Activated naive CD8-positive, alpha-beta T cell treated with anti-CD3 and anti-CD28 coated beads, Interleukin-2, amount 10 ng/mL, durations not matched to agents 7 days and 5 days (primary cell): ENCODE measurements at regions of chr16 and their contacts with region 1.

Region 1: GRCh38 chr16:68843482-68844210 is at the start of gene TANGO6:
- DNase-seq: peak; percentile 92
- ATAC-seq: peak; percentile 93
- H3K4me3 Mint-ChIP-seq: peak within 1 kb of the TSS; percentile 98
- H3K27ac Mint-ChIP-seq: peak within 1 kb of the TSS; percentile 95
- H3K4me1 Mint-ChIP-seq: peaks cover 26% of the 10 kb centered on the region
- H3K27me3 Mint-ChIP-seq: no peaks in the 10 kb centered on the region
- total RNA-seq, gene TANGO6: 29.2 to 29.7 TPM

Region 2: DNA sequence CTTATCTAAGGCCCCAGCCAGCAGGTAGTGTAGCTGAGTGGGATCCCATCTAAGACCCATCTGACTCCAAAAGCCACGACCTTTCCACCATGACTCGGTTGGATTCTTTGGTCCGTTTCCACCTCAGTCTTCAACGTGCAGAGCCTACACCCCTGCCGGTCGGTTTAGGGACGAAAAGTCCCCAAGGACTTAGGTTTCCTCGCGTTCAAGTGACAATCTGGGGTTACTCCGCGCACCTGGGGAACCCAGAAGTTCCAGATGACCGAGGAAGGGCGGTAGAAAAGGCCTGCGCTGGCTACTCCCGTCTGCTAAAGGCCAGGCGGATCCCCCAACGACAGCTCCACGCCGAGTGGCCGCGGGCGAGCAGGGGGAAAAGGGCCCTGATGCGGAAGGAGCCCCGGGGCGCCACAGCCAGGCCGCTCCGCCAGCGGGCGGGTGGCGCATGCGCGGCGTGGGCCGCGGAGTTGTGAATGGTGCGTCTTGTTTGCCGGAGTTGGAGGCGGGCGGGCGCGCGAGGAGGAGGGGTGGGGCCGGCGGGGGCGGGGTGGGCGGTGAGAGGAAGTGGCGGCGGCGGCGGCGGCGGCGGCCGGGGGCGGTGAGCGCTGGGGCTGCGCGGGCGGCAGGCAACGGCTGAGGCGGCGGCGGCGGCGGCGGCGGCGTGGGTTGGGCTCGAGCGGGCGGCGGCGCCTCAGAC is 1814.9 kb before region 1 on chr16 and contains the start of gene CBFB:
- POLR2A ChIA-PET with region 1: interaction called, 11 read pairs
- DNase-seq: peak; percentile 97
- ATAC-seq: peak; percentile 93
- H3K4me3 Mint-ChIP-seq: peak within 1 kb of the TSS; percentile 88
- H3K27ac Mint-ChIP-seq: peak within 1 kb of the TSS; percentile 92
- H3K4me1 Mint-ChIP-seq: peaks cover 44% of the 10 kb centered on the region
- H3K27me3 Mint-ChIP-seq: no peaks in the 10 kb centered on the region
- total RNA-seq, gene CBFB: 193 to 198 TPM

Region 3: GRCh38 chr16:68893710-68894705 is 50.4 kb after region 1 on chr16:
- POLR2A ChIA-PET with region 1: no interaction called
- DNase-seq: no peak
- ATAC-seq: no peak
- H3K4me3 Mint-ChIP-seq: no peak overlapping the region
- H3K27ac Mint-ChIP-seq: no peak overlapping the region
- H3K4me1 Mint-ChIP-seq: peaks cover 4% of the 10 kb centered on the region
- H3K27me3 Mint-ChIP-seq: no peaks in the 10 kb centered on the region